Breast epithelium (tissue), 4 donors: ENCODE measurements at regions of chr2 and their contacts with region 1.

Region 1: GRCh38 chr2:15992457-15993231 is 52.3 kb downstream of the MYCN start:
- DNase-seq: no peak
- H3K4me3 ChIP-seq: no peak overlapping the region
- H3K27ac ChIP-seq: no peak overlapping the region
- H3K4me1 ChIP-seq: no peaks in the 10 kb centered on the region
- H3K27me3 ChIP-seq: no peaks in the 10 kb centered on the region
- CTCF ChIP-seq: no peak
- POLR2A ChIP-seq: no peak

Region 2: GRCh38 chr2:15769676-15770547 is 222.7 kb before region 1 on chr2:
- intact Hi-C with region 1: no loop called
- DNase-seq: no peak
- H3K4me3 ChIP-seq: no peak overlapping the region
- H3K27ac ChIP-seq: no peak overlapping the region
- H3K4me1 ChIP-seq: no peaks in the 10 kb centered on the region
- H3K27me3 ChIP-seq: no peaks in the 10 kb centered on the region
- CTCF ChIP-seq: no peak
- POLR2A ChIP-seq: no peak

Region 3: DNA sequence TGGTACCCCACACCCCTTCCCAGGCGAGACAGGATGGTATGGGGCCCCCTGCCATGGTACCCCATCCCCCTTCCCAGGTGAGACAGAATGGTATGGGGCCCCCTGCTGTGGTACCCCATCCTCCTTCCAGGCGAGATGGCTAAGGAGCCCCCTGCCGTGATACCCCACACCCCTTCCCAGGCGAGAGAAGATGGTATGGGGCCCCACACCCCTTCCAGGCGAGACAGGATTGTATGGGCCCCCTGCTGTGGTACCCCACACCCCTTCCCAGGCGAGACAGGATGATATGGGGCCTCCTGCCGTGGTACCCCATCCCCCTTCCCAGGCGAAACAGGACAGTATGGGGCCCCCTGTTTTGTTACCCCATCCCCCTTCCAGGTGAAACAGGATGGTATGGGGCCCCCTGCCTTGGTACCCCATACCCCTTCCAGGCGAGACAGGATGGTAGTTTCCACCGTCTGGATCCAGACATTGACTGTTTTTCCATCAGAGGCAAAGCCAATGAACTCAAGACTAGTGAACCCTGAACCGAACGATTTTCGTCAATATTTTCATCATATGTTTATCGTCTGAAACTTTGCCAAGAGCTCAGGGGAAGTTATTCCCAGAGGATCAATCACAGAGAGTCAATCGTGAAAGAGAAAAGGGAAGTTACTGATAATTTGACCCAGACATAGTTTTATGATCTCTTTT is 22.7 kb after region 1 on chr2:
- intact Hi-C with region 1: loop called (anchors 1 kb)
- DNase-seq: no peak
- H3K4me3 ChIP-seq: no peak overlapping the region
- H3K27ac ChIP-seq: no peak overlapping the region
- H3K4me1 ChIP-seq: peaks cover 0 to 4% of the 10 kb centered on the region in 2 donors
- H3K27me3 ChIP-seq: peaks cover 0 to 17% of the 10 kb centered on the region in 2 donors
- CTCF ChIP-seq: no peak
- POLR2A ChIP-seq: no peak

Region 4: DNA sequence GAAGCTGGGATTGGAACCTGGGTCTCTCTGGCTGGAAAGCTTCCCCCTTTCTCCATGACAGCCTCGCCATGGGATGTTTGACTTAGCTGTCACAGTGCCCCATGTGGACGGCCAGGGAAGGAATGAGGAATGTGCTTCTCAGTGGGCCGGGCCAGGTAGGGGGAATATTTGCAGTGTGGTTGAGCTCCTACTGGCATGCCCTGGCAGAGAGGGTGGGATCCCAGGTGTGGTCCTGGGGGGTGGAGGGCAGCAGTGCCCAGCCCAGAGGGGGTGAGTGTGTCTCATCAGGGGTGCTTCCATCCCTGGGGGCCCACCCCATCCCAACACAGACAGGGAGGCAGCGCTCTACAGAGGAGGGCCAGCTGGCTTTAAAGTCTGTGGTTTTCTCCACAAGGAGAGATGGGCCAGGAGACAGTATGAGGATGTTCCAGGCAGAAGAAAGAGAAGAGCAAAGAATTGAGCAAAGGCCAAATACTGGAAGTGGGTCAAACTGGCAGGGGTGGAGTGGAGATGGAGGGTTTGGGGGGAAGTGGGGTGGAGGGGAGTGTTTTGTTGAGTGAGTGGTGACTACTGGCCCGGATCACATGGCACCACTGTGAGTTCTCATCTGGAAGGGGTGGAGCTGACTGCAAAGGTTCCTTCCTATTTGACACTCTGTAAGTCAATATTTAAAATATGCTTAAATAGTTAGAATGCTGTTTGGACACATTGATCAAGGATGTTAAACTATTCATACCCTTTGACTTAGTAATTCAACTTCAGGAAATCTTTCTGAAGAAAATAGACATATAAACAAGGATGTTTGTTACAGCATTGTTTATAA is 41.7 kb after region 1 on chr2:
- intact Hi-C with region 1: no loop called
- DNase-seq: no peak
- H3K4me3 ChIP-seq: no peak overlapping the region
- H3K27ac ChIP-seq: no peak overlapping the region
- H3K4me1 ChIP-seq: no peaks in the 10 kb centered on the region
- H3K27me3 ChIP-seq: no peaks in the 10 kb centered on the region
- CTCF ChIP-seq: no peak
- POLR2A ChIP-seq: no peak